PC-9 (cell line): ENCODE measurements at regions of chr4 and their contacts with region 1.

Region 1: DNA sequence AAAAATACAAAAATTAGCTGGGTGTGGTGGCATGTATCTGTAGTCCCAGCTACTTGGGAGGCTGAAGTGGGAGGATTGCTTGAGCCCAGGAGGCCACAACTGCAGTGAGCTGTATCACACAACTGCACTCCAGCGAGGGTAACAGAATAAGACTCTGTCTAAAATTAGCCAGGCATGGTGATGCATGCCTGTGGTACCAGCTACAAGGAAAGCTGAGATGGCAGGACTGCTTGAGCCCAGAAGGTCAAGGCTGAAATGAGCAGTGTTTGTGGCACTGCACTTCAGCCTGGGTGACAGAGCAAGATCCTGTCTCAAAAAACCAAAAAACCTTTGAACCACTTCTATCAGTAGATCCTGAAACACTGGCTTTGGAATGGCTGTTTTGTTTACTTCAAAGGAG is 10.2 kb downstream of the GRSF1 start:
- DNase-seq: no peak
- H3K4me3 ChIP-seq: no peak overlapping the region
- H3K27ac ChIP-seq: no peak overlapping the region
- H3K4me1 ChIP-seq: no peaks in the 10 kb centered on the region
- H3K27me3 ChIP-seq: no peaks in the 10 kb centered on the region
- CTCF ChIP-seq: no peak

Region 2: GRCh38 chr4:70488748-70489147 is 340.7 kb before region 1 on chr4:
- CTCF ChIA-PET with region 1: no interaction called
- POLR2A ChIA-PET with region 1: no interaction called
- intact Hi-C with region 1: no loop called
- DNase-seq: no peak
- H3K4me3 ChIP-seq: no peak overlapping the region
- H3K27ac ChIP-seq: no peak overlapping the region
- H3K4me1 ChIP-seq: no peaks in the 10 kb centered on the region
- H3K27me3 ChIP-seq: no peaks in the 10 kb centered on the region
- CTCF ChIP-seq: no peak

Region 3: GRCh38 chr4:70739496-70740337 is 89.8 kb before region 1 on chr4:
- CTCF ChIA-PET with region 1: no interaction called
- POLR2A ChIA-PET with region 1: no interaction called
- intact Hi-C with region 1: no loop called
- DNase-seq: peak in 1 of 2 experiments; percentile 35
- H3K4me3 ChIP-seq: no peak overlapping the region
- H3K27ac ChIP-seq: no peak overlapping the region
- H3K4me1 ChIP-seq: no peaks in the 10 kb centered on the region
- H3K27me3 ChIP-seq: no peaks in the 10 kb centered on the region
- CTCF ChIP-seq: no peak

Region 4: GRCh38 chr4:70754470-70754869 is 75.0 kb before region 1 on chr4:
- CTCF ChIA-PET with region 1: no interaction called
- POLR2A ChIA-PET with region 1: no interaction called
- intact Hi-C with region 1: no loop called
- DNase-seq: no peak
- H3K4me3 ChIP-seq: no peak overlapping the region
- H3K27ac ChIP-seq: no peak overlapping the region
- H3K4me1 ChIP-seq: no peaks in the 10 kb centered on the region
- H3K27me3 ChIP-seq: no peaks in the 10 kb centered on the region
- CTCF ChIP-seq: no peak

Region 5: GRCh38 chr4:70839589-70840093 is 10.1 kb after region 1 on chr4 and contains the start of gene GRSF1:
- CTCF ChIA-PET with region 1: interaction called, 12 read pairs
- POLR2A ChIA-PET with region 1: no interaction called
- intact Hi-C with region 1: no loop called
- DNase-seq: peak; percentile 58 to 86
- H3K4me3 ChIP-seq: peak within 1 kb of the TSS; percentile 80
- H3K27ac ChIP-seq: peak within 1 kb of the TSS; percentile 54
- H3K4me1 ChIP-seq: peaks cover 6% of the 10 kb centered on the region
- H3K27me3 ChIP-seq: no peaks in the 10 kb centered on the region
- CTCF ChIP-seq: no peak
- total RNA-seq, gene GRSF1: 52.4 and 70.0 TPM in 2 replicates

Region 6: GRCh38 chr4:71126719-71127118 is 297.2 kb after region 1 on chr4:
- CTCF ChIA-PET with region 1: no interaction called
- POLR2A ChIA-PET with region 1: no interaction called
- intact Hi-C with region 1: no loop called
- DNase-seq: peak; percentile 20 to 57
- H3K4me3 ChIP-seq: no peak overlapping the region
- H3K27ac ChIP-seq: no peak overlapping the region
- H3K4me1 ChIP-seq: 0 out of 2 replicates have a peak, but pooled peaks cover 9% of the 10 kb centered on the region
- H3K27me3 ChIP-seq: no peaks in the 10 kb centered on the region
- CTCF ChIP-seq: no peak